Activated naive CD4-positive, alpha-beta T cell treated with anti-CD3 and anti-CD28 coated beads, Interleukin-2, amount 10 ng/mL, durations not matched to agents 7 days and 5 days (primary cell): ENCODE measurements at regions of chr1 and their contacts with region 1.

Region 1: DNA sequence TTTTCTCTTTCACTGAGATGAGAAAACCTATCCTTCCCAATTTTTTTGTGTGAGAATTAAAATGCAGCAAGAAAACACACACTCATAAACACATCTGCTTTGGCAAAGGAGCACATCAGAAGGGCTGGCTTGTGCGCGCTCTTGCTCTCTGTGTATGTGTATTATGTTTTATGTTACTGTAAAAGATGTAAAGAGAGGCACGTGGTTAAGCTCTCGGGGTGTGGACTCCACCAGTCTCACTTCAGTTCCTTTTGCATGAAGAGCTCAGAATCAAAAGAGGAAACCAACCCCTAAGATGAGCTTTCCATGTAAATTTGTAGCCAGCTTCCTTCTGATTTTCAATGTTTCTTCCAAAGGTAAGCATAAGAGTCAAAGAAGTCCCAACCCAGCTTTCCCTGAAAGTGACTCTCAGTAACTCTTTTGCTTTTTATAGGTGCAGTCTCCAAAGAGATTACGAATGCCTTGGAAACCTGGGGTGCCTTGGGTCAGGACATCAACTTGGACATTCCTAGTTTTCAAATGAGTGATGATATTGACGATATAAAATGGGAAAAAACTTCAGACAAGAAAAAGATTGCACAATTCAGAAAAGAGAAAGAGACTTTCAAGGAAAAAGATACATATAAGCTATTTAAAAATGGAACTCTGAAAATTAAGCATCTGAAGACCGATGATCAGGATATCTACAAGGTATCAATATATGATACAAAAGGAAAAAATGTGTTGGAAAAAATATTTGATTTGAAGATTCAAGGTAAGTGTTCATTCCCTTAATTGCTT is at the start of gene CD2:
- DNase-seq: peak; percentile 74
- H3K4me3 Mint-ChIP-seq: peak within 1 kb of the TSS; percentile 99
- H3K27ac Mint-ChIP-seq: peak within 1 kb of the TSS; percentile 99
- H3K4me1 Mint-ChIP-seq: peaks cover 43% of the 10 kb centered on the region
- H3K27me3 Mint-ChIP-seq: no peaks in the 10 kb centered on the region

Region 2: DNA sequence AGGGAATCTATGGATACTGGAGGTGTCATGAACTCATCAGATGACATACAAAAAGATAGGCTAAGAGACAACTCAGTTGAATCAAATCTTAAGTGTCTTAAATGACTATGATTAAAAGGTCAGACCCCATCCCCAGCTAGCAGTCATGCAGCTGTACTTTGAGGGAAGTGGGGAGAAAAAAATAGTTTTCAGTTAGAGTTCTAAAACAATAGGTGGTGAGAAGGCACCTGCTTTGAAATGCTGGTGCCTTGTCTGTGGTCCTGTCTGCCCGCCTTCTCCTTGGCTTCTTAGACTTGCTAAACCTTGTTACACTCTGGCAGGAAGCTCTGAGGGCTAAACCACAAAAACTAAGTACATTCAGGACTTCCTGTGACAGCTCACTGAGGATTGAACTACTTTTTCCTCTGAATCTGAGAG is 15.2 kb after region 1 on chr1:
- CTCF ChIA-PET with region 1: interaction called, 31 read pairs
- DNase-seq: peak; percentile 85
- H3K4me3 Mint-ChIP-seq: peak overlapping the region; percentile 59
- H3K27ac Mint-ChIP-seq: peak overlapping the region; percentile 99
- H3K4me1 Mint-ChIP-seq: peaks cover 88% of the 10 kb centered on the region
- H3K27me3 Mint-ChIP-seq: no peaks in the 10 kb centered on the region

Region 3: GRCh38 chr1:116785006-116785405 is 30.6 kb after region 1 on chr1:
- CTCF ChIA-PET with region 1: no interaction called
- DNase-seq: no peak
- H3K4me3 Mint-ChIP-seq: no peak overlapping the region
- H3K27ac Mint-ChIP-seq: no peak overlapping the region
- H3K4me1 Mint-ChIP-seq: peaks cover 3% of the 10 kb centered on the region
- H3K27me3 Mint-ChIP-seq: peaks cover 4% of the 10 kb centered on the region